K562 (cell line): ENCODE measurements at regions of chr17 and their contacts with region 1.

Region 1: GRCh38 chr17:4997302-4998026 is at the starts of genes INCA1 and KIF1C:
- DNase-seq: peak; percentile 90 to 94 (median 90)
- ATAC-seq: peak; percentile 97
- H3K4me3 ChIP-seq: peak within 1 kb of the TSS; percentile 74
- H3K27ac ChIP-seq: peak within 1 kb of the TSS; percentile 83
- H3K4me1 ChIP-seq: peaks cover 11 to 34% of the 10 kb centered on the region in 2 experiments; a peak in 3 of 5 replicates
- H3K27me3 ChIP-seq: no peaks in the 10 kb centered on the region
- CTCF ChIP-seq: no peak
- EP300 ChIP-seq: no peak
- POLR2A ChIP-seq: peak; percentile 67
- RAD21 ChIP-seq: no peak
- polyA plus RNA-seq, gene INCA1: 0.11 to 0.50 TPM
- polyA plus RNA-seq, gene KIF1C: 0.38 to 0.48 TPM

Region 2: DNA sequence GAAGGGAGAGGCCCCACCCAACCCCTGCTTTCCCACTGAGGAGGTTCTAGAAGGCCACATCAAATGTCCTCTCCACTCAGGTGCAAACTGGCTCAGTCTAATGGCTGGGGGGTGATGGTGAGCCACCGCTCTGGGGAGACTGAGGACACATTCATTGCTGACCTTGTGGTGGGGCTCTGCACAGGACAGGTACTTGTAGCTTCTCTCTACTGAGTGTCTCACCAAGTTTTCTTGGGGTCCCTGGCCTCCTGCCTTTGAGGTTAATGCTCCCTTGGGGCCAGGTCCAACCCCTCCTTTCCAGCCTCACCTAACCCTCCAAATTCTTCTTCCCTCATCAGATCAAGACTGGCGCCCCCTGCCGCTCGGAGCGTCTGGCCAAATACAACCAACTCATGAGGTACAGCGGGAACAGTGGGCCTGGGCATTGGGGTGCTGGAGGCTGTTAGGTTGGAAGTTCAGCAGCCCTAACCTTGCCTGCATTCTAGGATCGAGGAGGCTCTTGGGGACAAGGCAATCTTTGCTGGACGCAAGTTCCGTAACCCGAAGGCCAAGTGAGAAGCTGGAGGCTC is 40.9 kb before region 1 on chr17:
- CTCF ChIA-PET with region 1: no interaction called
- POLR2A ChIA-PET with region 1: no interaction called
- in situ Hi-C with region 1: no loop called
- intact Hi-C with region 1: no loop called
- DNase-seq: peak in 2 of 4 experiments; percentile 18 to 59
- ATAC-seq: peak; percentile 50
- H3K4me3 ChIP-seq: no peak overlapping the region
- H3K27ac ChIP-seq: no peak overlapping the region
- H3K4me1 ChIP-seq: peaks cover 11 to 29% of the 10 kb centered on the region in 2 experiments
- H3K27me3 ChIP-seq: no peaks in the 10 kb centered on the region
- CTCF ChIP-seq: peak; percentile 37 to 51 (median 40); a peak in 4 of 6 replicates
- EP300 ChIP-seq: no peak
- POLR2A ChIP-seq: no peak
- RAD21 ChIP-seq: no peak

Region 3: DNA sequence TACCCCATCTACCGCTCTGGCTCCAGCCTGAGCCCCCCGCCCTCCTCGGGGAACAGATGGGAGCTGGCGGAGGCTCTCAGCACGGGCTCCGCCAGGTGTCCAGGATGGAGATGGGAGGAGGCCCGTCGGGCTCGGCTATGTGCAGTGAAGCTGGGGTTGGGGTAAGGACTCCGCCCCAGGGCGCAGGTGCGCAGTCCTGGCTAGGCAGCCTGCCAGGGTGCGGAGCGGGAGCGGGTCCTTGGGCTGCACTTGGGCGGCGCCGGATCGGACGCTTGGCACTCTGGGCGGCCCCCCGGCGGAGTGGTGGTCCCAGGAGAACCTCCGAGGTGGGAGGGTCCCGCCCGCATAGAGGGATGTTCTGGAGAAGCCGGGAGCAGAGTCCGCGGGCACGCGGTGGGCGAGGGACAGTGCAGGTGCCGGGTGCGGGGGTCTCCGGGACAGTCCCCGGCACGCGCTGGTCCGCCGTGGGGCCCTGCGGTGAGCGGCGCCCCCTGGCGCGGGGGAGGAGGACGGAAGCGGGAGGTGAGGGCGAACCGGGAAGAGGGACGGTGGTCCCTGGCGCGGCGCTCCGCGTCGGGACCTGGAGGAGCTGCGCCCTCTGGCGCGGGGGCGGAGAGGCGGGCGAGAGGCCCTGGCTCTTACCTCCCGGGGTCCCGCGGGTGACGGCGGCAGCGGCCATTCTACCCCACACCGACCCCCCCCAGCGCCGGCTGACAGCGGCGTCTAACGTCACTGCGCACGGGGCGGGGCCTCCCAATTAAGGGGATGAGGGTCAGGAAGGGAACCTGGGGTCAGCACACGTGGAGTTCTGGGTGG is 10.3 kb before region 1 on chr17 and contains the start of gene CAMTA2:
- CTCF ChIA-PET with region 1: interaction called, 4 read pairs
- POLR2A ChIA-PET with region 1: interaction called, 13 read pairs
- in situ Hi-C with region 1: no loop called
- intact Hi-C with region 1: no loop called
- DNase-seq: peak; percentile 85 to 90 (median 86)
- ATAC-seq: peak; percentile 93
- H3K4me3 ChIP-seq: peak within 1 kb of the TSS; percentile 77
- H3K27ac ChIP-seq: peak within 1 kb of the TSS; percentile 74
- H3K4me1 ChIP-seq: peaks cover 10 to 21% of the 10 kb centered on the region in 2 experiments; a peak in 4 of 5 replicates
- H3K27me3 ChIP-seq: no peaks in the 10 kb centered on the region
- CTCF ChIP-seq: peak; percentile 61 to 74 (median 65)
- EP300 ChIP-seq: peak; percentile 33; the same call in 1 of the 2 replicates
- POLR2A ChIP-seq: peak; percentile 74
- RAD21 ChIP-seq: peak; percentile 19 to 49; a peak in 3 of 4 replicates
- polyA plus RNA-seq, gene CAMTA2: 0.24 to 0.96 TPM

Region 4: GRCh38 chr17:5031365-5032082 is 34.1 kb after region 1 on chr17:
- CTCF ChIA-PET with region 1: no interaction called
- POLR2A ChIA-PET with region 1: no interaction called
- in situ Hi-C with region 1: no loop called
- intact Hi-C with region 1: no loop called
- DNase-seq: peak; percentile 79 to 87 (median 85)
- ATAC-seq: peak; percentile 90
- H3K4me3 ChIP-seq: peak overlapping the region; percentile 23; the same call in 1 of the 2 replicates
- H3K27ac ChIP-seq: peak overlapping the region; percentile 45; the same call in 1 of the 3 replicates
- H3K4me1 ChIP-seq: peaks cover 0 to 6% of the 10 kb centered on the region in 2 experiments; a peak in 3 of 5 replicates
- H3K27me3 ChIP-seq: no peaks in the 10 kb centered on the region; a peak in 1 of 5 replicates
- CTCF ChIP-seq: peak; percentile 57 to 67 (median 67)
- EP300 ChIP-seq: no peak
- POLR2A ChIP-seq: no peak
- RAD21 ChIP-seq: peak; percentile 19 to 34; a peak in 2 of 4 replicates